ENCODE measurements at regions of chr3 and their contacts with region 1.

Region 1: GRCh38 chr3:158539414-158540014 is 31.5 kb upstream of the MLF1 start:
- DNase-seq: no peak
- ATAC-seq: peak; percentile 87
- H3K4me3 ChIP-seq: no peak overlapping the region
- H3K27ac ChIP-seq: no peak overlapping the region
- H3K4me1 ChIP-seq: no peaks in the 10 kb centered on the region
- H3K27me3 ChIP-seq: no peaks in the 10 kb centered on the region
- CTCF ChIP-seq: peak; percentile 39 to 47 (median 46); a peak in 4 of 6 replicates
- EP300 ChIP-seq: no peak
- POLR2A ChIP-seq: no peak
- RAD21 ChIP-seq: peak; percentile 42; the same call in 1 of the 2 replicates

Region 2: GRCh38 chr3:157618075-157618760 is 921.3 kb before region 1 on chr3:
- CTCF ChIA-PET with region 1: interaction called, 3 read pairs
- POLR2A ChIA-PET with region 1: no interaction called
- RAD21 ChIA-PET with region 1: interaction called, 3 read pairs
- SMC1A ChIA-PET with region 1: no interaction called
- in situ Hi-C with region 1: loop called (anchors 10 kb)
- intact Hi-C with region 1: no loop called
- DNase-seq: peak; percentile 12
- ATAC-seq: peak; percentile 90
- H3K4me3 ChIP-seq: no peak overlapping the region
- H3K27ac ChIP-seq: no peak overlapping the region
- H3K4me1 ChIP-seq: no peaks in the 10 kb centered on the region
- H3K27me3 ChIP-seq: no peaks in the 10 kb centered on the region
- CTCF ChIP-seq: peak; percentile 55 to 62 (median 56); a peak in 5 of 6 replicates
- EP300 ChIP-seq: no peak
- POLR2A ChIP-seq: no peak
- RAD21 ChIP-seq: peak; percentile 68

Region 3: GRCh38 chr3:157865352-157866000 is 674.0 kb before region 1 on chr3:
- CTCF ChIA-PET with region 1: interaction called, 11 read pairs
- POLR2A ChIA-PET with region 1: no interaction called
- RAD21 ChIA-PET with region 1: no interaction called
- SMC1A ChIA-PET with region 1: no interaction called
- in situ Hi-C with region 1: no loop called
- intact Hi-C with region 1: no loop called
- DNase-seq: peak; percentile 1
- ATAC-seq: peak; percentile 99
- H3K4me3 ChIP-seq: no peak overlapping the region
- H3K27ac ChIP-seq: no peak overlapping the region
- H3K4me1 ChIP-seq: no peaks in the 10 kb centered on the region
- H3K27me3 ChIP-seq: no peaks in the 10 kb centered on the region
- CTCF ChIP-seq: peak; percentile 84 to 92 (median 85)
- EP300 ChIP-seq: no peak
- POLR2A ChIP-seq: no peak
- RAD21 ChIP-seq: peak; percentile 92

Region 4: DNA sequence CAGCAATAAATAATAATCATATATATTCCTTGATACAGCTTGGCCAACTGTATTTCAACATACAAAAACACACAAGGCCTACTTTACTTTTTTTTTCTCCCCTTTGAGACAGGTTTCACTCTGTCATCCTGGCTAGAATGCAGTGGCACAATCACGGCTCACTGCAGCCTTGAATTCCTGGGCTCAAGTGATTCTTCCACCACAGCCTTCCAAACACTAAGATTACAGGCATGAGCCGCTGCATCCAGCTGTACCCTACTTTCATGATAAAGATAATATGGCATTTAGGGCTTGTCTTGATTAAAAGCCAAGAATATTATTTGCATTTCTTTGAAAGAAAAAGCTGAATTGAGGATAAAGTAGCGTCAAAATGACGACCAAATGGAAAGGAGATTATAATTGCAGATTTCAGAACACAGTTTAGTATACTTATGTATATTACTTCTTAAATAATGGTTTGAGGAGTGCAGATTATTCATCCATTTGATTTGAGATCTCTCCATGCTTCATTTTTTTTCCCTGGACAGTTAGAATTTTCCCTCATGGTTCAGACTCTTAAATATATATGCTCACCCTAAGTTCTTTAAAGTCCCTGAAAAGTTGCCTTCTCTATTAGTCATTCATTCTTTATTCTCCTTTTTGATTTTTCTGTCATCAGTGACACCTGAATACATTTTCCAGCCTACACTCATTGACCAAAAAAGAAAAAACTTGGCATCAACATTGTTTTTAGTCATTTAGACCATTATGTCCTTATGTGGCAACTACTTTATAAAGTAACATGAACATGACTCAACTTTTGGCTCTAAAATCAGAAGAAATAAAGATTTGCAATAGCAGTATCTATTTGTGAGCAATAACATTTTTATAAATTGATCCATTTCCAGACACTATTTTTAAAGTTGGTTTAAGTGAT is 17.0 kb before region 1 on chr3:
- CTCF ChIA-PET with region 1: interaction called, 4 read pairs
- POLR2A ChIA-PET with region 1: no interaction called
- RAD21 ChIA-PET with region 1: no interaction called
- SMC1A ChIA-PET with region 1: interaction called, 10 read pairs
- in situ Hi-C with region 1: no loop called
- intact Hi-C with region 1: no loop called
- DNase-seq: no peak
- ATAC-seq: no peak
- H3K4me3 ChIP-seq: no peak overlapping the region
- H3K27ac ChIP-seq: no peak overlapping the region
- H3K4me1 ChIP-seq: no peaks in the 10 kb centered on the region
- H3K27me3 ChIP-seq: no peaks in the 10 kb centered on the region
- CTCF ChIP-seq: no peak
- EP300 ChIP-seq: no peak
- POLR2A ChIP-seq: no peak
- RAD21 ChIP-seq: no peak

Region 5: GRCh38 chr3:158570999-158571974 is 31.8 kb after region 1 on chr3 and contains the start of gene MLF1:
- CTCF ChIA-PET with region 1: interaction called, 13 read pairs
- POLR2A ChIA-PET with region 1: no interaction called
- RAD21 ChIA-PET with region 1: no interaction called
- SMC1A ChIA-PET with region 1: interaction called, 7 read pairs
- in situ Hi-C with region 1: no loop called
- intact Hi-C with region 1: no loop called
- DNase-seq: peak; percentile 42
- ATAC-seq: peak; percentile 99
- H3K4me3 ChIP-seq: peak within 1 kb of the TSS; percentile 62; the same call in 1 of the 2 replicates
- H3K27ac ChIP-seq: no peak within 1 kb of the TSS
- H3K4me1 ChIP-seq: no peaks in the 10 kb centered on the region
- H3K27me3 ChIP-seq: 0 out of 4 replicates have a peak, but pooled peaks cover 0 to 2% of the 10 kb centered on the region in 2 experiments
- CTCF ChIP-seq: no peak
- EP300 ChIP-seq: no peak
- POLR2A ChIP-seq: 0 out of 2 replicates have a peak, but pooled peaks have one; percentile 29
- RAD21 ChIP-seq: no peak
- polyA plus RNA-seq, gene MLF1: 0.39 to 0.42 TPM

Region 6: DNA sequence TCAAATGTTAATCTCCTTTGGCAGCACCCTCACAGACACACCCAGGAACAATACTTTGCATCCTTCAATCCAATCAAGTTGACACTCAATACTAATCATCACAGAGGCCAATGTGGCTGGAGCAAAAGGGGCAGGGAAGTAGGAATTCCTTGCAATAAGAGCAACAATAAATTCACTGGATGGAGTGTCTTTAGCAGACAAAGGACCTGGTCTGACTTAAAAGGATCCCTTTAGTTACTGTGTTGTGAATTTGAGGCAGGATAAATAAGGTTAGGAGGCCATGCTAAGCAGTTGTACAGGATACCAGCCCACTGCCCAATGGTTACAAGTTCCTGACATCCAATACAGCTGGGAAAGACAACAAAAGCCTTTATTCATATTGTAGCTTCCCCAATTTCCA is 92.5 kb after region 1 on chr3:
- CTCF ChIA-PET with region 1: no interaction called
- POLR2A ChIA-PET with region 1: no interaction called
- RAD21 ChIA-PET with region 1: no interaction called
- SMC1A ChIA-PET with region 1: no interaction called
- in situ Hi-C with region 1: no loop called
- intact Hi-C with region 1: no loop called
- DNase-seq: no peak
- ATAC-seq: no peak
- H3K4me3 ChIP-seq: no peak overlapping the region
- H3K27ac ChIP-seq: no peak overlapping the region
- H3K4me1 ChIP-seq: no peaks in the 10 kb centered on the region
- H3K27me3 ChIP-seq: peaks cover 0 to under 1% of the 10 kb centered on the region in 2 experiments; a peak in 1 of 4 replicates
- CTCF ChIP-seq: no peak
- EP300 ChIP-seq: no peak
- POLR2A ChIP-seq: no peak
- RAD21 ChIP-seq: no peak

Region 7: DNA sequence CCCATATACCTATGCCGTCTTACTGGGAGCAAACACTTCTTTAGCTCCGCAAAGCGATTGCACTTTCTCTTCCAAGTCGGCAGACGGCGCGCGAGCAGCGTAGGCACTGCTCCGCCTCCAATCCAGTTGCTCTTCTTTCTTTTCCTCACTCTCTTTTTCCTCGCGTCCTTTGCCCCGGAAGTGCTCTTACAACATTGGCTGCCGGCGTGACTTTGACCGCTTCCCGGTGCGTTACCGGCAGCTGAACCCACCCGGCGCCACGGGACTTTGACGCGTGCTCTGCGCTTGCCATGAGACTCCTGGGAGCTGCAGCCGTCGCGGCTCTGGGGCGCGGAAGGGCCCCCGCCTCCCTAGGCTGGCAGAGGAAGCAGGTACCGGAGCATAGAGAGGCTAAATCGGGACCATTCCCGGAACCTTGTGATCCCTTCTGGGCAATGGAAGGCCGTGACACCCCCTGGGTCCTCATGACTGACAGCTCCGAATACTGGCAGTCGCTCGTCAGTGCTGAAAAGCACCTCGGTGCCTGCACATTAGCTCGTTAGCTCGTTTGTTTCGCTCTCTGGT is 104.9 kb after region 1 on chr3 and contains the start of gene GFM1:
- CTCF ChIA-PET with region 1: interaction called, 15 read pairs
- POLR2A ChIA-PET with region 1: no interaction called
- RAD21 ChIA-PET with region 1: interaction called, 11 read pairs
- SMC1A ChIA-PET with region 1: interaction called, 3 read pairs
- in situ Hi-C with region 1: no loop called
- intact Hi-C with region 1: no loop called
- DNase-seq: peak; percentile 83
- ATAC-seq: peak; percentile 97
- H3K4me3 ChIP-seq: peak within 1 kb of the TSS; percentile 72
- H3K27ac ChIP-seq: peak within 1 kb of the TSS; percentile 75
- H3K4me1 ChIP-seq: no peaks in the 10 kb centered on the region
- H3K27me3 ChIP-seq: no peaks in the 10 kb centered on the region
- CTCF ChIP-seq: peak; percentile 96 to 99 (median 98); a peak in 5 of 6 replicates
- EP300 ChIP-seq: 0 out of 4 replicates have a peak, but pooled peaks of 1 of the 2 experiments have one; percentile 33
- POLR2A ChIP-seq: peak; percentile 95
- RAD21 ChIP-seq: no peak
- polyA plus RNA-seq, gene GFM1: 36.9 to 43.1 TPM

Region 8: GRCh38 chr3:158790901-158791589 is 251.5 kb after region 1 on chr3:
- CTCF ChIA-PET with region 1: interaction called, 11 read pairs
- POLR2A ChIA-PET with region 1: no interaction called
- RAD21 ChIA-PET with region 1: interaction called, 8 read pairs
- SMC1A ChIA-PET with region 1: interaction called, 6 read pairs
- in situ Hi-C with region 1: loop called (anchors 10 kb)
- intact Hi-C with region 1: loop called (anchors 1 kb)
- DNase-seq: no peak
- ATAC-seq: peak; percentile 87
- H3K4me3 ChIP-seq: no peak overlapping the region
- H3K27ac ChIP-seq: no peak overlapping the region
- H3K4me1 ChIP-seq: no peaks in the 10 kb centered on the region
- H3K27me3 ChIP-seq: no peaks in the 10 kb centered on the region; a peak in 1 of 4 replicates
- CTCF ChIP-seq: peak; percentile 79 to 88 (median 79)
- EP300 ChIP-seq: no peak
- POLR2A ChIP-seq: no peak
- RAD21 ChIP-seq: peak; percentile 92

Measured in GM12878 (cell line).